ENCODE measurements at regions of chr22 and their contacts with region 1.

Region 1: GRCh38 chr22:30680991-30681770 is 13.5 kb upstream of the OSBP2 start:
- DNase-seq: no peak
- ATAC-seq: no peak
- H3K4me3 ChIP-seq: no peak overlapping the region
- H3K27ac ChIP-seq: no peak overlapping the region
- H3K4me1 ChIP-seq: no peaks in the 10 kb centered on the region
- H3K27me3 ChIP-seq: no peaks in the 10 kb centered on the region
- CTCF ChIP-seq: no peak

Region 2: GRCh38 chr22:30870446-30871235 is 189.5 kb after region 1 on chr22:
- CTCF ChIA-PET with region 1: no interaction called
- POLR2A ChIA-PET with region 1: interaction called, 13 read pairs
- intact Hi-C with region 1: no loop called
- DNase-seq: no peak
- ATAC-seq: no peak
- H3K4me3 ChIP-seq: no peak overlapping the region
- H3K27ac ChIP-seq: no peak overlapping the region
- H3K4me1 ChIP-seq: no peaks in the 10 kb centered on the region
- H3K27me3 ChIP-seq: no peaks in the 10 kb centered on the region
- CTCF ChIP-seq: no peak

Region 3: DNA sequence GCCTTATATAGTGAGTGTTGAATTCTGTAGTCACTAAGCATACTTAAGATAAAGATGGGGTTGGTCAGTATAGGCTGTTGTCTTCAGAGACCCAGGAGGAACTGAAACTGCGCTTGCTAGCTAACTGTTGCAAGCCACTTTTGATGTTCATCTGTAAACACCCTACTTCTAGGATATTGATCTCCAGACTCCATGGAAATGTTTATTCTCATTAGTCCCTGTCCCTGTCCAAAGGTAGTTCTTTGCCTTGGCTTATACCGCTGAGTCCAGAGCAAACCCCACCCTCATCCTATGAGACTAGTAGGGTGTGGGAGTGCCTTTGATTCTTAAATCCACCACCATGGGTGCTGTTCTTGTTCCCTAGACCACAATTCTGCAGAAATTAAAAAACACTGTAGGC is 1109.1 kb after region 1 on chr22:
- CTCF ChIA-PET with region 1: no interaction called
- POLR2A ChIA-PET with region 1: interaction called, 15 read pairs
- intact Hi-C with region 1: no loop called
- DNase-seq: no peak
- ATAC-seq: no peak
- H3K4me3 ChIP-seq: no peak overlapping the region
- H3K27ac ChIP-seq: no peak overlapping the region
- H3K4me1 ChIP-seq: no peaks in the 10 kb centered on the region
- H3K27me3 ChIP-seq: no peaks in the 10 kb centered on the region
- CTCF ChIP-seq: no peak